Activated B cell treated with CpG ODN at 0.5 μM for 24 hours (primary cell): ENCODE measurements at regions of chr7 and their contacts with region 1.

Region 1: DNA sequence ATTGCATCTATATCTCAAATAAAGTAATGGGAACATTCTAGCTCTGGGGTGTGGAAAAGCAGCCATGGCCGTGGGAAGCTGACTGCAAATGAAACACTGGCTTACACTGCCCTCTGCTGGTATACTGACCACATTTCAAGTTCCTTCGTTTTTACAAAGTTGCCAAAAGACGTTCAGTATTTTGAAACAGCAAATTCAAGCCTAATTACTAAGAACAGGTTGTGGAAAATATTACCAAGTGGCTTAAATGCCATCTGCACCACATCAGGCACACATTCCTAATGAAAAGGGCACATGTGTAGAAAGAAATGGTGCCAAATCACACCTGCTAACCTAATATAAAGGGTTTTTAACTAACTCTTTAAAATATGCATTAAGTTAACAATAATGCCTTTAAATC is 83.9 kb downstream of the JAZF1 start:
- DNase-seq: no peak
- ATAC-seq: no peak
- H3K4me3 Mint-ChIP-seq: no peak overlapping the region
- H3K27ac Mint-ChIP-seq: no peak overlapping the region
- H3K4me1 Mint-ChIP-seq: peaks cover 40% of the 10 kb centered on the region
- H3K27me3 Mint-ChIP-seq: no peaks in the 10 kb centered on the region
- CTCF ChIP-seq: peak; percentile 50

Region 2: DNA sequence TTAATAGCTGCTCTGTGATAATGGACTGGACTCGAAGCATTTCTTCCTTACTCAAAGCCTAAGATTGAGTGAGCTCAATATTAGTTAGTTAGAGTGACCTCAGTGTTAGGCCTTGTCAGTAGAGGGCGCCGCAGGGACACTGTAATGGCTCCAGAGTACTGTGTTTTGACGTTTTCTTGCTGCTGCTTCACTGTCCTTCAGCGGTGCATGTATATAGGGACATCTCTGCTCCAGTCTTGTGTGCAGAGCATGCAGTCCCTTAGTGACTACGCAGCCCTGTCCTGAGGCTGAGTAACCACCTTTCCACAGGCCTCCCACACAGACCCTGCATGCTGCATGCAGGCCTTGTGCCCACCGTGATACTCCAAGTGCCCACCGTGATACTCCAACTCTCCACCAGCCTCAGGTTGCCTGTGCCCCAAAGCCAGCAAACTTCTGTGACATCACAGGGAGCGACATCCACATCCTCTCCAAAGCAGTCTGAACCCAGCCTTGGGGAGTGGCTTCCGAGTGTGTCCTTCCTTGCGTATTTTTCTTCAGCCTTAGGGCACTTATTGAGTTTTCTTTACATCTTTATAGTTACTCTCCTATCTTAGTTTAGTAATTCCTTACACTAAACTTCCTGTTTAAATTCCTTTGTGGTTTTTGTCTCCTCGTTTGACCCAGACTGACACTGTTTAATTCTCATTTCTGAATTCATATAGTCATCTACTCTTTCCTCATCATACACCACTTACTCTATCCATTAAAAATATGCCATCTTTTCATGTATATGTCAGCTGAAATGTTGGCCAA is 34.3 kb before region 1 on chr7:
- CTCF ChIA-PET with region 1: interaction called, 8 read pairs
- POLR2A ChIA-PET with region 1: no interaction called
- intact Hi-C with region 1: loop called (anchors 2 kb)
- DNase-seq: peak; percentile 33
- ATAC-seq: peak; percentile 64
- H3K4me3 Mint-ChIP-seq: no peak overlapping the region
- H3K27ac Mint-ChIP-seq: no peak overlapping the region
- H3K4me1 Mint-ChIP-seq: peaks cover 34% of the 10 kb centered on the region
- H3K27me3 Mint-ChIP-seq: no peaks in the 10 kb centered on the region
- CTCF ChIP-seq: peak; percentile 40

Region 3: DNA sequence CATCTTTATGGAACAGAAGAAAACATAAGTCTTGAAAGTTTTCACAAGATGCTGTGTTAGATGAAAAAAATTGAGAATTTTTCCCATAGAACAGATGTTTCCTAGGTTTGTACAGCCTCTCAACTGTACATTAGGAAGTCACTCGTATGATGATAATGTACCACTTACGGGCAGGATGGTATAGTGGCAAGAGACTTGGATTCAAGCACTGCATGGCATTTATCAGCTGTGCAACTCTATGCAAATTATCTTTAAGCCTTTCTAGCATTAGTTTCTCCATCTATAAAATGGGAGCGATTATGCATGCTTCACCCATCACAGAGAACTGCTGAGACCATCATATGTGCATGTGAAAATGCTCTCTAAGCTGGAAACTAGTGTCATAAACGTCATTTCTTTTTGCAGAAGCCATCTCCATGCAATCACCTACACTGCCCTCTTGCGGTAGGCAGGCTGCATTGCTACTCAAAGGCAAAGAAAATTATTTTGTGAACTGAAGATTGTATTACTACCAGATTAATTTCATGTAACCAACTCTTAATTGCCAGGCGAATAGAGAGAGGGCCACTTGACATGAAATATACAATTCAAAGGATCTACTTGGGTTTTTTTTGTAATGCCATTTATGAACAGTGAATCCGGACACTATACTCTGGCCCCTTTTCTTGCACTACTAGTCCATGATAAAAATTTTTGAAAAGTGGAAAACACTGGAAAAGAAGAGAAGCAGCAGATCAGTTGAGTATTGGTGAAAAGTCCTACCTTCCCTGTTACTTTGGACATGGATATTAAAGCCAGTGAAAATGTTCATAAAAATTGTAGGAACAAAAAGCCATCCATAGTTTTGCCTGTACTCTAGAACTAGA is 18.4 kb before region 1 on chr7:
- CTCF ChIA-PET with region 1: interaction called, 15 read pairs
- POLR2A ChIA-PET with region 1: no interaction called
- intact Hi-C with region 1: loop called (anchors 1 kb)
- DNase-seq: no peak
- ATAC-seq: peak; percentile 71
- H3K4me3 Mint-ChIP-seq: no peak overlapping the region
- H3K27ac Mint-ChIP-seq: no peak overlapping the region
- H3K4me1 Mint-ChIP-seq: peaks cover 43% of the 10 kb centered on the region
- H3K27me3 Mint-ChIP-seq: no peaks in the 10 kb centered on the region
- CTCF ChIP-seq: peak; percentile 62

Region 4: GRCh38 chr7:28125431-28126409 is 29.0 kb after region 1 on chr7:
- CTCF ChIA-PET with region 1: interaction called, 13 read pairs
- POLR2A ChIA-PET with region 1: interaction called, 3 read pairs
- intact Hi-C with region 1: no loop called
- DNase-seq: no peak
- ATAC-seq: no peak
- H3K4me3 Mint-ChIP-seq: no peak overlapping the region
- H3K27ac Mint-ChIP-seq: peak overlapping the region; percentile 13
- H3K4me1 Mint-ChIP-seq: peaks cover 97% of the 10 kb centered on the region
- H3K27me3 Mint-ChIP-seq: no peaks in the 10 kb centered on the region
- CTCF ChIP-seq: no peak

Region 5: GRCh38 chr7:28311670-28312069 is 215.0 kb after region 1 on chr7:
- CTCF ChIA-PET with region 1: no interaction called
- POLR2A ChIA-PET with region 1: no interaction called
- intact Hi-C with region 1: no loop called
- DNase-seq: no peak
- ATAC-seq: no peak
- H3K4me3 Mint-ChIP-seq: no peak overlapping the region
- H3K27ac Mint-ChIP-seq: no peak overlapping the region
- H3K4me1 Mint-ChIP-seq: no peaks in the 10 kb centered on the region
- H3K27me3 Mint-ChIP-seq: peaks cover 47% of the 10 kb centered on the region
- CTCF ChIP-seq: no peak

Region 6: GRCh38 chr7:28442540-28443420 is 346.1 kb after region 1 on chr7:
- CTCF ChIA-PET with region 1: no interaction called
- POLR2A ChIA-PET with region 1: interaction called, 15 read pairs
- intact Hi-C with region 1: no loop called
- DNase-seq: no peak
- ATAC-seq: no peak
- H3K4me3 Mint-ChIP-seq: no peak overlapping the region
- H3K27ac Mint-ChIP-seq: no peak overlapping the region
- H3K4me1 Mint-ChIP-seq: no peaks in the 10 kb centered on the region
- H3K27me3 Mint-ChIP-seq: peaks cover 22% of the 10 kb centered on the region
- CTCF ChIP-seq: no peak